ENCODE measurements at regions of chr5 and their contacts with region 1.

Region 1: DNA sequence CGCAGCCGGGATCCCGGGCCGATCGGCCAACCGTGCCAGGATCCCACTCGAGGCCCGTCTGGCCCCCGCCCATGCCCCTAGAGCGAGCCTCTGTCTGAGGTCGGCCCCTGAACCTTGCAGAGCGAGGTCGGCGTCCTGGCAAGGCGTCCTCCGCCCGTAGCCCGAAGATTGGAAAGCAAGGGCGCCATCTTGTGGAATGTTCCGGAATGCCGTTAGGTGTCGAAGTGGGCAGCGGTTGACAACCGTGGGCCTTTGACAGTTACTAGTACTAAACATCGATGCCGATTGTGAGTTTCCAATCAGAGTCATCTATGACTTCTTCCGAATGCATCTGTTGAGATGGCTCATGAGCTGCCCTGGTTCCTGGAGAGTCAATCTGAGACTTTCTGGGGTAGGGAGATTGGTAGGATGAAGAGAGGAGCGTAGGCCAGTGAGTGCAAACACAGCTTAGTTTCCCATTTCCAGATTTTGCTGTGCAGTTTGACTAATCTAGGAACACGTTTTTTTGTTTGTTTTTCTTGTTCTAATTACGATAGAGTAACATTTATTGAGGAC is 923 bp upstream of the PLK2 start:
- DNase-seq: peak; percentile 96

Region 2: DNA sequence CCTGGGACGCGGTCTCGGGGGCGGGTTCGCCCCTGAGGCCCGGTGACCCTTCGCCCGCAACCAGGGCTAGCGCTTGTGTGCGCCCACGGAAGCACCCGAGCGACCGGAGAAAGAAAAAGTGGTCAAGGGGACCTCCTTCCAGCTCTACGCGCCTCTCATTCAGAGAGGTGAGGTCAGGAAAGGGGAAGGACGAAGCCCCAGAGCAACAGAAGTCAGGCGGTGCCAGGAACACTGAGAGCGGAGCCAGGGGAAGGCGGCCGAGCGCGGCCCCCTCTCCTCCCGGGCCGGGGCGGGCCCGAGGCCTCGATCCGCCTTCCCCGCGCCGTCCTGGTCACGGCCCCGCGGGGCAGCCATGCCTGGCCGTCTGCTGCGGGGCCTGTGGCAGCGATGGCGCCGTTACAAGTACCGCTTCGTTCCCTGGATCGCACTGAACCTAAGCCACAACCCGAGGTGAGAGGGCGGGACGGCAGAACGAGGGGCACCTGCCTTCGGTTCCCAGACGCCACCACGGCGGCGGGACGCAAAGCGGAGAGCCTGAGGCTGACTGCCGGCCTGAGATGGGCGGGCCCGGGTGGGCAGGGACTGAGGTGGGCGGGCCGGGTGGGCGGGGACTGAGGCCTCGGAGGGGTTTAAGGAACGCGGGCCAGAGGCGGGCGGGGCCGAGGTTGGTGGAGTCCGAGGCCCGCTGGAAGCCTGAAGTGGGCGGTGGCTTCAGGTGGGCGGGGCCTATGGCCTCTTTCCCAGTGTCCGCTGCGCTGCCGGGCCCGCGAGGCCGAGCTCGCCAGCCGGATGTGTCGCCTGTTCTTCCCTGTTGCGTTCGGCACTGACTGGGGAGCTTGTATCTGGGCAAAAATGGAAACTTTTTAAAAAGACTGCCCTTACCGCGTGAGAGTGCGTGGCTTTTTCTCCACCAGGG is 1551.3 kb before region 1 on chr5 and contains the start of gene SETD9:
- intact Hi-C with region 1: loop called in 1 of 2 experiments (anchors 10 kb)
- DNase-seq: peak; percentile 100
- total RNA-seq, gene SETD9: 4.3 to 9.3 TPM

Region 3: DNA sequence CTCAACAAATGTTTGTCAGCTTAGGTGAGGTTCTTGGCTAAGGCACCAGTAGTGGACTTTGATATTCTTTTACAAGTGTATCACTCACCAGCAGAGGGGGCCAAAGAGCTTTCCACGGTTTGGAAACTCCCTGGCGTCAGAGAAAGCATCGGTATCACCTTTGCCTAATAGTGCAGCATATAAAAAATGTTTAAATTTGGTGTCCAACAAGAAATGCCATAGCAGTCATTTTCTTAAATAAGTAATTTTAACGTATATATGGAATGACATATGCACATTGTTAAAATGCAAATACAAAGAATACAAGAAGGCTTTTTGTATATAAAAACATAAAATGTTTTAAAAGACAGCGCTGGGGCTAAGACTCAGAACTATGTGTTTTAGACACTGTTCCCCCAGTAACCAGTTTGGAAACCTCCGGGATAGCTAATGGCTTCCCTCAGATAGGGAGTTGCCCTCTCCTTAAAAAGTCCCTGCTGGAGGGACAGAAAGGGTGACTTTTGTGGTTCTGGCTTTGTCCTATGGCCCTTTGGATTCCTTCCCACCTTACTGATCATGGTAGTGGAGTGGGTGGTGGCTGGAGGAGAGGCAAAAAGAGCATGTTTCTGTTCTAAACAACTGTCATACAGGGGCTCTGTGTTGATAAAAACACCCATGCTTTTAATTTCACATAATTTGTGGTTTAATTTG is 1162.4 kb before region 1 on chr5:
- intact Hi-C with region 1: loop called (anchors 2 to 5 kb)
- DNase-seq: peak; percentile 85

Region 4: DNA sequence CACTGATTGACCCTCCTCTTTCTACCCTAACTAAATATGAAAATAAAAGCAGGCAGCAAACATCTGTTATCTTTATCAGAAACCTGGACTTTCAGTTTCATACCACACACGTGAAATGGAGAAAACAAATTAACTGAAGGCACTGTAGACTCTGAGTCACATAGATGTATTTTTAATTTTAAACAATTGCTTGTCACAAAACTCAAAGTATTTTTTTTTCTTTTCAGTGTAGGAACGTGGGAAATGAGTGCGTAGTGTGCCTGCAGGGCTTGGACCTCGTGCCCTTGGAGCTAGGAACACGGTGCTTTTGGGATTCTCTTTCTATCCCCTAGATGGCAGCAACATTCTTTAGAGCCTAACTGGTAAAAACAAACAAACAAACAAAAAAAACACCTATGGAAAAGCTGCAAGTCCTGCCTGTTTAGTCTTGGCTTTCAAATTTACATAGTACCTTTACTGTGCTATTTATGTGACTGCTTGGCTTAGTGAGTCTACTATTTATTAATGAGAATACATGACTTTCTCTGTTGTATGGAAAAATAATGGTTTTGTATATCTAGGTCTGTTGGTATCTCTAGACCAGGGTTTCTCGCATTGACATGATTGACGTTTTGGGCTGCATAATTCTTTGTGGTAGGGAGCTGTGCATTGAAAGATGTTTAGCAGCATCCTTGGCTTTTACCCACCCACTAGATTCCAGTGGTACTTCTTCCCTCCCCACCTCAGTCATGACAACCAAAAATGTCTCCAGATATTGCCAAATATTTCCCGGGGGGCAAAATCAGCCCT is 961.4 kb before region 1 on chr5:
- intact Hi-C with region 1: loop called in 1 of 2 experiments (anchors 10 kb)
- DNase-seq: no peak

Region 5: GRCh38 chr5:57779383-57780223 is 681.2 kb before region 1 on chr5:
- intact Hi-C with region 1: loop called (anchors 5 to 10 kb)
- DNase-seq: no peak